Psoas muscle (tissue), 8 donors: ENCODE measurements at regions of chr18 and their contacts with region 1.

Region 1: GRCh38 chr18:58625839-58626238 is 3.1 kb downstream of the ALPK2 start:
- DNase-seq: no peak
- ATAC-seq: no peak
- H3K4me3 ChIP-seq: peak overlapping the region; percentile 68
- H3K27ac ChIP-seq: peak overlapping the region; percentile 87
- H3K4me1 ChIP-seq: peaks cover 12% of the 10 kb centered on the region
- H3K27me3 ChIP-seq: no peaks in the 10 kb centered on the region
- CTCF ChIP-seq: no peak

Region 2: GRCh38 chr18:58590839-58591238 is 35.0 kb before region 1 on chr18:
- intact Hi-C with region 1: loop called in 1 of 2 experiments (anchors 5 kb)
- DNase-seq: no peak
- ATAC-seq: peak in 3 of 4 donors; percentile 35 to 55 (median 38)
- H3K4me3 ChIP-seq: no peak overlapping the region
- H3K27ac ChIP-seq: peak overlapping the region; percentile 78
- H3K4me1 ChIP-seq: peaks cover 36% of the 10 kb centered on the region
- H3K27me3 ChIP-seq: no peaks in the 10 kb centered on the region
- CTCF ChIP-seq: no peak